Breast epithelium (tissue), 4 donors: ENCODE measurements at regions of chr18 and their contacts with region 1.

Region 1: DNA sequence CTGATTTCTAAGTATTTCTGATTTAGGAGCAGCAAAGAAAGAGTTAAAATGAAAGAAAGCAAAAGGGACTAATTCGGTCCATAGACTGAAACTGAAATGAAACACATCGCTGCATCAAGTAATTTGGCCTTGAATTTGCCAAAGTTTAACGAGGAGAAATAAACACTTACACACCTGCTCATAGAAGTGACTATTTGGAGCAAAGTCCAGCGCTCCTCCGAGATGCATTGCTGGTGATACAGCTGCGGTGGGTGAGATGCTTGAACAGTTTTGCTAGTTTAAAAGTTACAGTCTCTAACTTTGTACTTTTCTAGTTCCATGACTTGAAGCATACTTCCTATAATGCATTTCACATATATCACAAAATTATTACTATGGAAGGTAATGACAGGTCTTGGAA is 18.3 kb downstream of the GALR1 start:
- DNase-seq: no peak
- H3K4me3 ChIP-seq: no peak overlapping the region
- H3K27ac ChIP-seq: no peak overlapping the region
- H3K4me1 ChIP-seq: no peaks in the 10 kb centered on the region
- H3K27me3 ChIP-seq: no peaks in the 10 kb centered on the region
- CTCF ChIP-seq: no peak
- POLR2A ChIP-seq: no peak

Region 2: DNA sequence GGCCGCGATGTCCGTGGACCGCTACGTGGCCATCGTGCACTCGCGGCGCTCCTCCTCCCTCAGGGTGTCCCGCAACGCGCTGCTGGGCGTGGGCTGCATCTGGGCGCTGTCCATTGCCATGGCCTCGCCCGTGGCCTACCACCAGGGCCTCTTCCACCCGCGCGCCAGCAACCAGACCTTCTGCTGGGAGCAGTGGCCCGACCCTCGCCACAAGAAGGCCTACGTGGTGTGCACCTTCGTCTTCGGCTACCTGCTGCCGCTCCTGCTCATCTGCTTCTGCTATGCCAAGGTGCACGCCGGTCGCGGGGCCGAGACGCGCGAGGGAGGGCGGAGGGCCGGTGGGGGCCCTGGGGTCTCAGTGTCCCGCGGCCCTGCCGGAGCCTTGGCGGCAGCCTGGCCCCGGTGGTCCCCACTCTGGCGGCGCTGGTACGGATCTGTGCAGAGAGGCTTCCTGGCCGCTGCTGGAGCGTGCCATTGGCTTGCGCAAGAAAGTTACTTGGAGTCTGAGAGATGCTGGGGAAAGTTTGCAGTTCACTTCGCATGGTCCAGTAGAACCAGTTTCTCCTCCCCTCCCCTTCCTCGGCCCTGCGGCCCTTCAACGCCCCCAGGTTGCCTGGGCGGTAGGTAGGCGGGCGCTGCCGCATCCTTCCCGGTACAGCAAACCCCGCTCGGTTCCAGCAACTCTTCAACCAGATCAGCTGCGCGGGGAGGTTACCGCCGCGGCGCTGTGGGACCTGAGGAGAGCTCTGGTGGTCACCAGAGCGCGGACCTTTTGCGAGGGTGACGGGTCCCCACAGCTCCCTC is 16.8 kb before region 1 on chr18:
- intact Hi-C with region 1: loop called (anchors 1 kb)
- DNase-seq: no peak
- H3K4me3 ChIP-seq: peak overlapping the region in 2 of 3 donors; percentile 31 to 58
- H3K27ac ChIP-seq: no peak overlapping the region
- H3K4me1 ChIP-seq: peaks cover 0 to 10% of the 10 kb centered on the region in 2 donors
- H3K27me3 ChIP-seq: peaks cover 0 to 60% of the 10 kb centered on the region in 2 donors
- CTCF ChIP-seq: no peak
- POLR2A ChIP-seq: no peak

Region 3: GRCh38 chr18:78006774-78007260 is 738.8 kb after region 1 on chr18:
- intact Hi-C with region 1: no loop called
- DNase-seq: no peak
- H3K4me3 ChIP-seq: no peak overlapping the region
- H3K27ac ChIP-seq: no peak overlapping the region
- H3K4me1 ChIP-seq: no peaks in the 10 kb centered on the region
- H3K27me3 ChIP-seq: peaks cover 0 to 5% of the 10 kb centered on the region in 2 donors
- CTCF ChIP-seq: no peak
- POLR2A ChIP-seq: no peak

Region 4: GRCh38 chr18:78056011-78056410 is 788.0 kb after region 1 on chr18:
- intact Hi-C with region 1: no loop called
- DNase-seq: no peak
- H3K4me3 ChIP-seq: no peak overlapping the region
- H3K27ac ChIP-seq: no peak overlapping the region
- H3K4me1 ChIP-seq: no peaks in the 10 kb centered on the region
- H3K27me3 ChIP-seq: peaks cover 0 to 12% of the 10 kb centered on the region in 2 donors
- CTCF ChIP-seq: no peak
- POLR2A ChIP-seq: no peak